PC-9 (cell line): ENCODE measurements at regions of chr15 and their contacts with region 1.

Region 1: GRCh38 chr15:95281470-95281869 is 1049.0 kb upstream of the NR2F2 start:
- DNase-seq: no peak
- H3K4me3 ChIP-seq: no peak overlapping the region
- H3K27ac ChIP-seq: no peak overlapping the region
- H3K4me1 ChIP-seq: no peaks in the 10 kb centered on the region
- H3K27me3 ChIP-seq: no peaks in the 10 kb centered on the region
- CTCF ChIP-seq: no peak

Region 2: DNA sequence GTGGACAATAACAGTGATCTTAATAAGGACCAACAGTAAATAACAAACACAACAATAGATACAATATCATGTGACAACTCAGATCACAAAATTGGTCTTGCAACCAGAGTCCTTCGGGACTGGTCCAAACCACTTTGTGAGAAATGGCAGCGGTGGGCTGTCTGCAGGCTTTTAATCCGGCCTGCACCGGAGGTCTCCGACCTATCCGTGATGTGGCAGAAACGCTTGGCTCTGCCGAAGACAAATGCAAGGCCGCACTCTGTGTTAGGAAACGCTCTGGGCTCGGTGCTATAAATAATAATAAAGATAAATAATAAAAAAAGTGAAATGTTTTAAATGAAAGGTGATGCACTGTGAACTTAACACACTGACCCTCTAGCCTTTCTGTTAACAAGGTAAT is 238.4 kb after region 1 on chr15:
- CTCF ChIA-PET with region 1: no interaction called
- POLR2A ChIA-PET with region 1: interaction called, 13 read pairs
- intact Hi-C with region 1: no loop called
- DNase-seq: no peak
- H3K4me3 ChIP-seq: no peak overlapping the region
- H3K27ac ChIP-seq: no peak overlapping the region
- H3K4me1 ChIP-seq: no peaks in the 10 kb centered on the region
- H3K27me3 ChIP-seq: no peaks in the 10 kb centered on the region
- CTCF ChIP-seq: no peak

Region 3: DNA sequence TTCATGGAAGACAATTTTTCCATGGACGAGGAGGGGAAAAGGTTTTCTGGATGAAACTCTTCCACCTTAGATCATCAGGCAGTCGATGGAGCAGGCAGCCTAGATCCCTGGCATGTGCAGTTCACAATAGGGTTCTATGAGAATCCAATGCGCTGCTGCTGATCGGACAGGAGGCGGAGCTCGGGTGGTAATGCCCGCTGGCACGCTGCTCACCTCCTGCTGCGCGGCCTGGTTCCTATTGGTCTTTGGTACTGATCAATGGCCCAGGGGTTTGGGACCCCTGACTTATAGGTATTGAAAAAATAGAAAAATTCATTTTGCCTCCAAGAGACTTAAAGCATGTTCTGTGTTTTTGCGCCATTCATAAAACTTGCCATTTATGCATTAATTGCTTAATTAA is 255.2 kb after region 1 on chr15:
- CTCF ChIA-PET with region 1: no interaction called
- POLR2A ChIA-PET with region 1: no interaction called
- intact Hi-C with region 1: no loop called
- DNase-seq: no peak
- H3K4me3 ChIP-seq: no peak overlapping the region
- H3K27ac ChIP-seq: no peak overlapping the region
- H3K4me1 ChIP-seq: no peaks in the 10 kb centered on the region
- H3K27me3 ChIP-seq: no peaks in the 10 kb centered on the region
- CTCF ChIP-seq: no peak